ENCODE measurements at regions of chr10 and their contacts with region 1.

Region 1: DNA sequence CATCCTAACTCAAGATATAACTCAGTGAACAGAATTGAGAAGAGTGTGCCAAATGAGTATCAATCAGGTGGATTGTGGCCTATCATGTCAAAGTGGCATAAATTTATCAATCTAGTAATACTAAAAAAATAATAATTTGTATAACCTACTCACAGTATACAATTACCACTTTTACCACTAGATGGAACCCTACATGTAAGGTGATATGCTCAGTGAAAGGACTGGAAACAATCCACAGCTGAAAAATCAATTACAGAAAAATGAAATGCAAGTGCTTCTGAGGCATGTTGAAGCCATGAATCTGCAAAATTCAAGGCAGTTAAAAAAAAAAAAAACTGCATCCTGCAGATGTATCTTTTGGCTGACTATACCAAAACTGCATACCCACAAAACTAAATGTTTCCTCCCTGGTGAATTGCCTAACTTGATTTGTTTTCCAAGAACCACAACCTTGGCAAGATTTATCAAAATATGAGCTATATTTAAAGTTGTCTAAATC is 13.9 kb downstream of the ARHGAP19 start:
- DNase-seq: no peak
- ATAC-seq: peak; percentile 70
- H3K4me3 Mint-ChIP-seq: no peak overlapping the region
- H3K27ac Mint-ChIP-seq: no peak overlapping the region
- H3K4me1 Mint-ChIP-seq: peaks cover 14% of the 10 kb centered on the region
- H3K27me3 Mint-ChIP-seq: no peaks in the 10 kb centered on the region
- CTCF ChIP-seq: peak; percentile 68

Region 2: DNA sequence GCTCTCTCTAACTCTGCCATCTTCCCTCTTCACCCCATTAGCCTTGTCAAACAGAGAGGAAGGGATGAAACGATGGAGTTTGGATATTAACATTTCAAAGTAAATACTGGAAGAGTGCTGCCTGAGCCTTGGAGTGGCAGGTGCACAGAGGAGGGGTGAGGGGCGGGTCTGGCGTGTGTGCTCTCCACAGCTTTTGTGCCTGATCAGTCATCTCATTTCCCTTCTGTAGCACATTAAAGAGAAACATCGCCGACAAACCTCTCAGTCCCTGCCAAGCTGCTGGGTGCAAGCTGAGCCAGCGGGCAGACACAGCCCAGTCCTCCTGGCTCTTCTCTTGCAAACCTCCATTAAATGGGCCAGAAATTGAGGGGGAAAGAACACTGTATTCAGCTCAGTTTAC is 169.0 kb before region 1 on chr10:
- CTCF ChIA-PET with region 1: no interaction called
- POLR2A ChIA-PET with region 1: no interaction called
- intact Hi-C with region 1: no loop called
- DNase-seq: no peak
- ATAC-seq: no peak
- H3K4me3 Mint-ChIP-seq: no peak overlapping the region
- H3K27ac Mint-ChIP-seq: no peak overlapping the region
- H3K4me1 Mint-ChIP-seq: peaks cover 2% of the 10 kb centered on the region
- H3K27me3 Mint-ChIP-seq: peaks cover 10% of the 10 kb centered on the region
- CTCF ChIP-seq: no peak

Region 3: GRCh38 chr10:97263971-97264370 is 14.6 kb before region 1 on chr10:
- CTCF ChIA-PET with region 1: interaction called, 26 read pairs
- POLR2A ChIA-PET with region 1: interaction called, 3 read pairs
- intact Hi-C with region 1: no loop called
- DNase-seq: no peak
- ATAC-seq: no peak
- H3K4me3 Mint-ChIP-seq: no peak overlapping the region
- H3K27ac Mint-ChIP-seq: no peak overlapping the region
- H3K4me1 Mint-ChIP-seq: peaks cover 3% of the 10 kb centered on the region
- H3K27me3 Mint-ChIP-seq: no peaks in the 10 kb centered on the region
- CTCF ChIP-seq: no peak

Region 4: DNA sequence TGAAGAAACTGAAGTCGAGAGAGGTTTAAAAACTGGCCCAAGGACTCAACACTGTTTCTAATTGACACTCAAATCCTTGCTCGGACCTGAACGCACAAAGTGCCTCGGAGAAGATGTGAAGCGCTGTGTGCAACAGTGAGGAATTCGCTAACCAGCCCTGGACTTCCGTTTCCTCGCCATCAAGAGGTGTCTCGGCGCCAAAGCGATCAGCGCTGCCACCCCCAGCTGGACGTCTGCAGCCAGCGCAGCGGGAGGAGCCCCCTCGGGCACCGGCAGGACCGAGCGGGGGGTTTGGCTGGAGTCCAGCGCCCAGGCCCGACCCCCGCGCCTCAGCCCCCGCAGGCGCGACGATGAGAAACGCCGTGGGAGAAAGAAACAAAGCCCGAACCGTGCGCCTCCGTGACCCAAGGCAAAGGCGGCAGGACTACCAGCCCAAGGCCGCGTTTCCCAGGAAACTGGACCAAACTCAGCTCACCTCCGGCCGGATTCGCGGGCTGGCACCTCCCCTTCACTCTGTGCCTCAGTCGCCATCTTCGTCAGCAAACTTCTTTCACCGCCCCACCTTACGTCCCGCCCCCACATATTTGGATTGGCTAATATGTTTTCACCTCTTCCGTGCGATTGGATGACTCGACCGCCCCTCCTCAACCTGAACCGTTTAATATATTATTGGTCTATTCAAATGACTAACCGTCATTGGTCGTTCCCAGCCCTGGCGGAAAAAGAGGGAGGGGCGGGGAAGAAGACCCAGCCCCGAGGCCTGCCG is 13.7 kb after region 1 on chr10 and contains the start of gene ARHGAP19:
- CTCF ChIA-PET with region 1: interaction called, 15 read pairs
- POLR2A ChIA-PET with region 1: no interaction called
- intact Hi-C with region 1: no loop called
- DNase-seq: peak; percentile 98
- ATAC-seq: peak; percentile 99
- H3K4me3 Mint-ChIP-seq: peak within 1 kb of the TSS; percentile 88
- H3K27ac Mint-ChIP-seq: peak within 1 kb of the TSS; percentile 87
- H3K4me1 Mint-ChIP-seq: peaks cover 16% of the 10 kb centered on the region
- H3K27me3 Mint-ChIP-seq: peaks cover 2% of the 10 kb centered on the region
- CTCF ChIP-seq: no peak
- total RNA-seq, gene ARHGAP19: 42.3 to 53.2 TPM

Region 5: DNA sequence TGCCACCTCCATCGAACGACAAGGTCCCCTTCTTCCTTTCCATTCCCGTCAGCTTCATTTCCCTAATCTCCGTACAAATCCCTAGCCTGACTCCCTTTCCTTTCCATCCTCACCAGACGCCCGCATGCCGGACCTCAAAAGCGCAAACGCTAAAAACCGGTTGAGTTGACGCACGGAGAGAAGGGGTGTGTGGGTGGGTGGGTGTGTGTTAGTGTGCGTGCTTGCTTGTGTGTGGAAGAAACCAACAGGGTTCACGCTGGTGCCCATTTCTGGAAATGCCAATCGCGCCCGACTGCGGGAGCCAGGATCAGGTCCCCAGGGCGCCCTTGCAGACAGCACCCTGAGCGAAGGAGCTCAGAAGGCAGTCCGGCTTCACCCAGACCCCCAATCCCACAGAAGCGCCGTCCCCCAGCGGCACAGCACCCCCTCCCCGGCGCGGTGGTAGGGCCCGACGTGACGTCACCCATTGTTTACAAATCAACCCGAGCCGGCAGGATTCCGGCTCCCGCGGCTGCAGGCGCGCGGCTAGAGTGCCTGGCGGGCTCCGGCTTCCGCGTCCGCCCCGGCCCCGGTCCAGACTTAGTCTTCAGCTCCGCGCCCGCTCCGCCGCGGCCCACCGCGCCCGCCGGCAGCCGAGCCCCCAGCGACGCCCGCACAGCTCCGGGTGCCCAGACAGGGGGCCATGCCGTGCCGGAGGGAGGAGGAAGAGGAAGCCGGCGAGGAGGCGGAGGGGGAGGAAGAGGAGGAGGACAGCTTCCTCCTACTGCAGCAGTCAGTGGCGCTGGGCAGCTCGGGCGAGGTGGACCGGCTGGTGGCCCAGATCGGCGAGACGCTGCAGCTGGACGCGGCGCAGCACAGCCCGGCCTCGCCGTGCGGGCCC is 40.5 kb after region 1 on chr10 and contains the start of gene FRAT1:
- CTCF ChIA-PET with region 1: interaction called, 19 read pairs
- POLR2A ChIA-PET with region 1: interaction called, 3 read pairs
- intact Hi-C with region 1: no loop called
- DNase-seq: peak; percentile 91
- ATAC-seq: peak; percentile 70
- H3K4me3 Mint-ChIP-seq: peak within 1 kb of the TSS; percentile 83
- H3K27ac Mint-ChIP-seq: peak within 1 kb of the TSS; percentile 99
- H3K4me1 Mint-ChIP-seq: peaks cover 21% of the 10 kb centered on the region
- H3K27me3 Mint-ChIP-seq: peaks cover 2% of the 10 kb centered on the region
- CTCF ChIP-seq: no peak
- total RNA-seq, gene FRAT1: 3.0 to 3.2 TPM

Region 6: GRCh38 chr10:97334370-97335175 is 56.0 kb after region 1 on chr10 and contains the start of gene FRAT2:
- CTCF ChIA-PET with region 1: interaction called, 40 read pairs
- POLR2A ChIA-PET with region 1: interaction called, 8 read pairs
- intact Hi-C with region 1: loop called (anchors 5 kb)
- DNase-seq: peak; percentile 90
- ATAC-seq: peak; percentile 82
- H3K4me3 Mint-ChIP-seq: peak within 1 kb of the TSS; percentile 77
- H3K27ac Mint-ChIP-seq: peak within 1 kb of the TSS; percentile 86
- H3K4me1 Mint-ChIP-seq: peaks cover 36% of the 10 kb centered on the region
- H3K27me3 Mint-ChIP-seq: no peaks in the 10 kb centered on the region
- CTCF ChIP-seq: no peak
- total RNA-seq, gene FRAT2: 5.6 to 6.4 TPM

Region 7: GRCh38 chr10:97356318-97356914 is 77.9 kb after region 1 on chr10:
- CTCF ChIA-PET with region 1: interaction called, 19 read pairs
- POLR2A ChIA-PET with region 1: no interaction called
- intact Hi-C with region 1: no loop called
- DNase-seq: no peak
- ATAC-seq: no peak
- H3K4me3 Mint-ChIP-seq: no peak overlapping the region
- H3K27ac Mint-ChIP-seq: no peak overlapping the region
- H3K4me1 Mint-ChIP-seq: no peaks in the 10 kb centered on the region
- H3K27me3 Mint-ChIP-seq: no peaks in the 10 kb centered on the region
- CTCF ChIP-seq: no peak